ENCODE measurements at regions of chr12 and their contacts with region 1.

Region 1: GRCh38 chr12:8678661-8679111 is 16.1 kb upstream of the MFAP5 start:
- DNase-seq: no peak

Region 2: DNA sequence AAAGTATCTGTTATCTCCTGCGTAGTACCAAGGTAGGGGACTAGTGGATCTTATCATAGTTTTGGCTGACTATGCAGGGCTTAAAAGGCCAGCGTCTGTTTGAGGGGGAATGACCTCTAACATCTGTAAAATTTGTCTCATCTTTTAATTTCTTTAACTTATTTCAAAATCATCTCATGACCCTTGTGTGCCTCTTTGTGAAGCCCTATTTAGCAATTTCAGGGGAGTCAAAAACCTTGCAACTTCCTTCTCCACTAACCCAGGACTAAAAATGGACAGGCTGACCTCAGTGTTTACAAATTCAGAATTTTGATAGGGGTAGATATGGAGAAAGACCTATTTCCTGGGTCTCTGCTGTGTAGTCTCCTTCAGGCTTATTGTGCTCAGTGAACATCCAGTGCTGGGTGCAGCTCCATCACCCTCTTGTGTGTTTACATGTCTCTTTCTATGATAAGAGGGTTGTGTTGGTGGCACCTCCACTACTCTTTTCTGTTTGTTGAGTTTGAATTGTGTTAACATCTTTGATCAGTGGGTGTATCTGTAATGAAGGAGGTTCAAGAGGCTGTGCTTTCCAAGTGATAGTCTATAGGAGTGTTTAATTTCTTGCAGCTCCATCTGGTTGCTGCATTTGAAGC is 582.3 kb before region 1 on chr12:
- intact Hi-C with region 1: no loop called
- DNase-seq: no peak

Region 3: DNA sequence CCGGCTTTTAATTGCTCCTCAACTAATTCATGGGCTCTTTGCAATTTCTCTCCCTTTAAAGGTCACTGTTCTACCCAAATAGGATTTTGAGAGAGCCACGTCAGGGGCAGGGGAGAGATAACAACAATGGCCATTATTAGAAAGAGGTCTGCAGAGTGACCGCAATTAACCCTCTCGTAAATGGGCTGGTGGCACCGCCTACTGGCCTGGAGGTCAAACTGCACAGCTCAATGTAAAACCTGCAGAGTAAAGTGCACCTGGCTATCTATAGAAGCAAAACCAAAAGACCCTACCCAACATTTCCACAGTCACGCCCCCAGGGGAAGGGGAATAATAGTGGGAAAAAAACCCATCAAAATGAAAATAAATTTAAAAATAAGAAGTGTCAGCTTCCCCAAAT is 116.4 kb before region 1 on chr12:
- intact Hi-C with region 1: no loop called
- DNase-seq: no peak

Region 4: GRCh38 chr12:8629486-8630033 is 49.1 kb before region 1 on chr12:
- intact Hi-C with region 1: no loop called
- DNase-seq: no peak

Region 5: GRCh38 chr12:9039397-9039977 is 360.8 kb after region 1 on chr12:
- intact Hi-C with region 1: loop called (anchors 10 kb)
- DNase-seq: peak in 11 of 42 donors; percentile 20 to 64 (median 30)